CD8-positive, alpha-beta memory T cell (primary cell): ENCODE measurements at regions of chr20 and their contacts with region 1.

Region 1: DNA sequence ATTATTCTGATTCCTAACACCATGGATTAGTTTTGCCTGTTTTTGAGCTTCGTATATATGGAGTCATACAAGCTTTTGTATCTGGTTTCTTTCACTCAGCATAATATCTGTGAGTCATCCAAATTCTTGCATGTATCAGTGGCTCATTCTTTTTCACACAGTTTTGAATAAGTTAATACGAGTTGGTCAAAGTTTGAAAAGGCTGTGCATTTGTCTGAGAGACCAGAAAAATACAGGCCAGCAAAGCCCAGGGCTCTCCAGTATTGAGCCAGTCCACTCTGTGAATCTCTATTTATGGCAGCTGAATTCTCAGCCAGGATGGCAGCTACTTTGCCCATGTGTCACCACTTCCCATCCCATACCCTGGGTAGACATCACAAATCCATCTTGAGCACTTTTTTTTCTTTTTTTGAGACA is 7.2 kb upstream of the CHMP4B start:
- DNase-seq: no peak
- H3K4me3 ChIP-seq: no peak overlapping the region
- H3K4me3 Mint-ChIP-seq: no peak overlapping the region
- H3K27ac ChIP-seq: no peak overlapping the region
- H3K27ac Mint-ChIP-seq: no peak overlapping the region
- H3K4me1 ChIP-seq: no peaks in the 10 kb centered on the region
- H3K4me1 Mint-ChIP-seq: no peaks in the 10 kb centered on the region
- H3K27me3 ChIP-seq: no peaks in the 10 kb centered on the region
- H3K27me3 Mint-ChIP-seq: no peaks in the 10 kb centered on the region

Region 2: DNA sequence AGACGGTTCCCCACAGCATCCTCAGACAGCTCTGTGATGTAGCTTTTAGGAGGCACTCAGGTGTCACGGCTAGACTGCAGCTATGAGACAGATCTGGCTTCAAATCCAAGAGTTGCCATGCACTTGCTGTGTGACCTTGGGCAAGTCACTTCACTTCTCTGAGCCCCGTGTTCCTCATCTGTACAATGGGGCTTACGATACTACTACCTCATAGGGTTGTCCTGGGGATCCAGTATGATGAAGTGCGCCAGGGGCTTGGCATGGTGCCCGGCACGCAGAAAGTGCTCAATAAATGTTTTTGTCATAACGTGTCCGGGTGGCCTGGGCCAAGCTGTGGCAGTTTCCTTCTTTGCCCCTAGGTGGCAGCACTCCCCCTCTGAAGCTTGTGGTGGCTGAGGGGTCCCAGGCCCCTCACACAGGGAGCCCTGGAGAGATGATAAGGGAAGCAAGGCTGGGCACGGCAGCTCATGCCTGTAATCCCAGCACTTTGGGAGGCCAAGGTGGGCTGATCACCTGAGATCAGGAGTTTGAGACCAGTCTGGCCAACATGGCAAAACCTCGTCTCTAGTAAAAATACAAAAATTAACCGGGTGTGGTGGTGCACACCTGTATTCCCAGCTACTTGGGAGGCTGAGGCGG is 11.9 kb before region 1 on chr20:
- CTCF ChIA-PET with region 1: interaction called, 10 read pairs
- POLR2A ChIA-PET with region 1: no interaction called
- DNase-seq: peak; percentile 20 to 67 (median 33)
- H3K4me3 ChIP-seq: no peak overlapping the region
- H3K4me3 Mint-ChIP-seq: no peak overlapping the region
- H3K27ac ChIP-seq: no peak overlapping the region
- H3K27ac Mint-ChIP-seq: peak overlapping the region in 1 of 8 donors; percentile 17
- H3K4me1 ChIP-seq: peaks cover 6% of the 10 kb centered on the region
- H3K4me1 Mint-ChIP-seq: peaks cover 8 to 27% (median 18%) of the 10 kb centered on the region in 3 donors
- H3K27me3 ChIP-seq: no peaks in the 10 kb centered on the region
- H3K27me3 Mint-ChIP-seq: no peaks in the 10 kb centered on the region

Region 3: DNA sequence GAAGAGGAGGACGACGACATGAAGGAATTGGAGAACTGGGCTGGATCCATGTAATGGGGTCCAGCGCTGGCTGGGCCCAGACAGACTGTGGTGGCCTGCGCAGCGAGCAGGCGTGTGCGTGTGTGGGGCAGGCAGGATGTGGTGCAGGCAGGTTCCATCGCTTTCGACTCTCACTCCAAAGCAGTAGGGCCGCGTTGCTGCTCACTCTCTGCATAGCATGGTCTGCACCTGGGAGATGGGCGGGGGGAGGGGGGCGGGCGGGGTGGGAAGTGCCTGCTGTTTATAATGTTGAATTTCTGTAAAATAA is 49.5 kb after region 1 on chr20:
- CTCF ChIA-PET with region 1: no interaction called
- POLR2A ChIA-PET with region 1: no interaction called
- DNase-seq: peak in 1 of 5 donors; percentile 53
- H3K4me3 ChIP-seq: no peak overlapping the region
- H3K4me3 Mint-ChIP-seq: peak overlapping the region in 2 of 7 donors; percentile 22 to 42
- H3K27ac ChIP-seq: no peak overlapping the region
- H3K27ac Mint-ChIP-seq: peak overlapping the region in 6 of 8 donors; percentile 15 to 80 (median 66)
- H3K4me1 ChIP-seq: peaks cover 26% of the 10 kb centered on the region
- H3K4me1 Mint-ChIP-seq: peaks cover 23 to 56% (median 41%) of the 10 kb centered on the region in 3 donors
- H3K27me3 ChIP-seq: no peaks in the 10 kb centered on the region
- H3K27me3 Mint-ChIP-seq: peaks cover 0 to 3% of the 10 kb centered on the region in 2 donors

Region 4: DNA sequence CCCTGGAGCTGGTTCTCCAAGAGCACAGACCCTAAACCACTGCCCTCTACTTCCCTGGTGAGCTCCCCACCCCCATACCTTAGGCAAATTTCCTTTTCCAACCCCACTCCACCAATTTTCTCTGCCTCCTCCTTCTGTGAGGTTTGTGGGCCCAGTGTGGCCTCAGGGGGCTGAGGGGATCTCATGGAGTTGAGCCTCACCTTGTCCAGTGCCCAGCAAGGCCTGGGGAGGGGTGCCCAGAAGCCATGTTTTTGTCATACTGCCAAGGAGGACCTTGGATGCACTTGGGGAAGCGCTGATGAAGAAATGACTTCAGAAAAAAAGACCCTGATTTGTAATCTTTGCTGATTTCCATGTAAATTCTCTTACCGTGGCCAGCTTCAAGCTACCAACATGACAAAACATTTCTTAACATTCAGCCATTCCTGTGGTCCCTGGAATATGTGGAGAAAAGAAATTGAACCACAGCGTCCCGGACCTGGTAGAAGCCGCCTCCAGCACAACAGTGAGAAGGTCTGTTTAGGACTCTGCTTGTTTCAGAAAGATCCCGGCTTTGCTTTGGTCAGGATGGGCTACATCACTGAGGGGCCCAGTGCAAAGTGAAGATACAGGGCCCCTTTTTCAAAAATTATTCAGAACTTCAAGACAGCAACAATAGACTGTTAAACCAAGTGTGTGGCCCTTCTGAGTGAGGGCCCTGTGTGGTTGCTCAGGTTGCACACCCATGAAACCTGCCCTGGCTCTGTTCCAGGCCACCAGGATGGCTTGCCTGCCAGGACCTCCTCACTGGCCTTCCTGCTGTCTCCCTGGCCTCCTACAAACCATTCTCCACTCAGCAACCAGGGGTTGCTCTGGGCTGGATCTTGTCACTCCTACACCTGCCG is 59.8 kb after region 1 on chr20:
- CTCF ChIA-PET with region 1: no interaction called
- POLR2A ChIA-PET with region 1: no interaction called
- DNase-seq: no peak
- H3K4me3 ChIP-seq: no peak overlapping the region
- H3K4me3 Mint-ChIP-seq: no peak overlapping the region
- H3K27ac ChIP-seq: no peak overlapping the region
- H3K27ac Mint-ChIP-seq: peak overlapping the region in 1 of 8 donors; percentile 12
- H3K4me1 ChIP-seq: peaks cover 19% of the 10 kb centered on the region
- H3K4me1 Mint-ChIP-seq: peaks cover 13 to 14% (median 13%) of the 10 kb centered on the region in 3 donors
- H3K27me3 ChIP-seq: no peaks in the 10 kb centered on the region
- H3K27me3 Mint-ChIP-seq: peaks cover 0 to 1% of the 10 kb centered on the region in 2 donors